SK-N-SH (cell line): ENCODE measurements at regions of chr13 and their contacts with region 1.

Region 1: DNA sequence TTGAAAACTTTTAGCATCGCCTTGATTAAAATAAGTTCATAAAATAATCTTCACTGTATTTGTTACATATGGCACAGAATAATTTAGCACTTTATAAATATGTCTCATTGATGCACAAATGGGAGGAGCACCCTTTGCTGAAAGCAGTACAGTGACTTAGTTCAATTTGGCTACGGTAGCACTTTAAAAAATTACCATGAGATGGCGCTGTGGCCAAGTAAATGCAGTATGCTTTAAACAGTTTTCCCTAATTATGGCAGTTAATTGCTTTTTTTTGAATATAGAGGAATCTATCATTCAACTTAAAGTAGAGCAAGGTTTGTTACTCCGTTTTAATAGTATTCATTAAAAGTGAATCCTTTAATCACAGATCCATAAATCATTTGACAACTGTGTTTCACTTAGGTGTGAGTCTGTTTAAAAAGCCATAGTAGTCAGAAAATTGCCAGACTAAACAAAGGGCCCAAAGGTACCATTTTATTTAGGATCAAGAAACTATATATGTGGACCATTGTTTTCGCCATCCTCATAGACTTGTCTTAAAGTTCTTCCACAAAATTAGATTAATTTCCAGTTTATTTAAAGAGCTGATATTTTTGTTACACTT is 34.7 kb upstream of the ESD start:
- DNase-seq: peak; percentile 33
- H3K4me3 ChIP-seq: no peak overlapping the region; a peak in 1 of 4 replicates
- H3K27ac ChIP-seq: no peak overlapping the region
- H3K4me1 ChIP-seq: no peaks in the 10 kb centered on the region
- H3K27me3 ChIP-seq: no peaks in the 10 kb centered on the region
- CTCF ChIP-seq: peak; percentile 95
- EP300 ChIP-seq: no peak
- RAD21 ChIP-seq: peak; percentile 94

Region 2: DNA sequence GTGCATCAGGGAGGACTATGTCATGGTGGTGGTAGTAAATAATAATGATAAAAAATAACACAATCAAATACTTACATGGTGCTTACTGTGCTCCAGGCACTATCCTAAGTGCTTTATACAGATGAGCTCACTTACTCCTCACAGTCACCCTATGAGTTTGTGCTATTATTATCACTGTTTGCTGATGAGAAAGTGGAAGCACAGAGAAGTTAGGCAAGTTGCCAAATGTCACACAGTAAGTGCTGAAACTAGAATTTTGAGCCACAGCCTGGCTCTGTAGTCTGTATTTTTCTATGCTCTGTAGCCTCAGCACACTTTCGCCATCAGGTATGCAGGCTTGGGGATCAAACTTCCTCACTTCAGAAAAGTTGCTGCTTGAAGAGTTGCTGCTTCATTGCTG is 18.5 kb after region 1 on chr13:
- CTCF ChIA-PET with region 1: interaction called, 30 read pairs
- POLR2A ChIA-PET with region 1: no interaction called
- DNase-seq: no peak
- H3K4me3 ChIP-seq: no peak overlapping the region
- H3K27ac ChIP-seq: no peak overlapping the region
- H3K4me1 ChIP-seq: no peaks in the 10 kb centered on the region; a peak in 2 of 4 replicates
- H3K27me3 ChIP-seq: no peaks in the 10 kb centered on the region
- CTCF ChIP-seq: no peak
- EP300 ChIP-seq: no peak
- RAD21 ChIP-seq: no peak